A549 (cell line): ENCODE measurements at regions of chr1 and their contacts with region 1.

Region 1: DNA sequence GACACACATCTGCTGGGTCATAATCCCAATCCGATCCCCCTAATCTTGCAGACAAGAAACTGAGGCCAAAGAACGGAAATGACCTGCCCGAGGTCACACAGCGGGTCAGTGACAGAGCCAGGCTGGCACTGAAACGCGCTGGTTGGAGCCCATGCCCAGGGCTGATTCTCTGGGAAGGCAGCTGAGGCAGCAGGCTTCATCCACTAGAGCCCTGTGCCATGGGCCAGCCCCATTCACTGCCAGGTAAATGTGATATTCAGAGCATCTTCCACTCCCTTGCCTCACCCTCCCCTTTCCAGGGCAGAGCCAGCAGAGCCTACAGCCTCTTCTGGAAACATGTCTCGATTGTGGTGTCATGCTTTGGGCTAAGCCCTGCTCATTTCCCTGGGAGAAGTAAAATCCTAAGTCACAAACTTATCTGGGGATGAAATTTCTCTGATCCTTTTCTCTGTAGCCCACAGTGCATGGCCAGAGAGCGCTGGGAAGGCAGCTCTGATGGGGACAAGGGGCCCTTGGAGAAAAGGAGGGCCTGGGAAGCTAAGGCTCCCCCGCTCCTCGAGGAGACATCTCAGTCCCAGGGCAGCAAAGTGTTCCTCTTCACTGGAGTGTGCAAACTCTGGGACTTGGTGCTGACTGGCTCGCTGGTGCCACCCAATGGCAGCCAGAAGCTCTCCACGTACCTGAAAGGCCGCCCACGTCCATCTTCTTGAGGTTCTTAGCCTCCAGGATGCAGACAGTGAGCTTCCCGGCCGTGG is 110.4 kb downstream of the SYT2 start:
- DNase-seq: peak; percentile 82 to 83
- ATAC-seq: peak; percentile 89 to 98
- H3K4me3 ChIP-seq: no peak overlapping the region
- H3K27ac ChIP-seq: peak overlapping the region; percentile 53 to 73
- H3K4me1 ChIP-seq: peaks cover 5% of the 10 kb centered on the region; the same call in 2 of the 3 replicates
- CTCF ChIP-seq: peak; percentile 84
- EP300 ChIP-seq: no peak
- POLR2A ChIP-seq: no peak
- RAD21 ChIP-seq: peak; percentile 93 to 94

Region 2: DNA sequence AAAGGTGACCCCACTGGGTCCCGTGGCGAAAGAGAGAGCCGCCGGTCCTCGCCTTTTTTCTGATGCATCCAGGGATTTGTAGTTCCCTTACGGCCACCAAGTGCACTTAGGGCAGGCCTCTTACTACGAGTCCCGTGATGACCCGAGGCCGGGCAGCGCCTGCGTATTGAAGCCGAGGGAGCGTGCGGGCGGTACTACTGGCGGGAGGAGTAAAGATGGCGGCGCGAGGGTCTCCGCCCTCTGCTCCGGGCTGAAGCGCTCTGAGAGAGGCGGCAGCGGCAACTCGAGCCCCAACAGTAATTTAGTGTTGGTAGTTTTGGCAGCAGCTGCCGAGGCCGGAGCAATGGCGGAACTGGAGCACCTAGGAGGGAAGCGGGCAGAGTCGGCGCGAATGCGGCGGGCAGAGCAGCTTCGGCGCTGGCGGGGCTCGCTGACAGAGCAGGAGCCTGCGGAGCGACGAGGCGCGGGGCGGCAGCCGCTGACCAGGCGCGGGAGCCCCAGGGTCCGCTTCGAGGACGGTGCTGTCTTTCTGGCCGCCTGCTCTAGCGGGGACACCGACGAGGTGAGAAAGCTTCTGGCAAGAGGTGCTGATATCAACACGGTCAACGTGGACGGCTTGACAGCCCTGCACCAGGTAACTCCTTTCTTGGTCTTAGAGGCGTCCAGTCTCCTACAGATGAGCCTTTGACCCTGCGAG is 251.2 kb before region 1 on chr1 and contains the start of gene PPP1R12B:
- CTCF ChIA-PET with region 1: interaction called, 13 read pairs
- POLR2A ChIA-PET with region 1: no interaction called
- DNase-seq: peak; percentile 86 to 99
- ATAC-seq: peak; percentile 98 to 99
- H3K4me3 ChIP-seq: peak within 1 kb of the TSS; percentile 86
- H3K27ac ChIP-seq: peak within 1 kb of the TSS; percentile 87 to 92
- H3K4me1 ChIP-seq: peaks cover 38% of the 10 kb centered on the region
- CTCF ChIP-seq: no peak
- EP300 ChIP-seq: no peak
- POLR2A ChIP-seq: peak; percentile 77
- RAD21 ChIP-seq: 0 out of 5 replicates have a peak, but pooled peaks of 1 of the 2 experiments have one; percentile 16
- polyA plus RNA-seq, gene PPP1R12B: 12.1 and 14.8 TPM in 2 replicates

Region 3: GRCh38 chr1:202501281-202501680 is 98.6 kb before region 1 on chr1:
- CTCF ChIA-PET with region 1: interaction called, 26 read pairs
- POLR2A ChIA-PET with region 1: no interaction called
- DNase-seq: peak; percentile 3 to 41
- ATAC-seq: peak; percentile 84 to 87
- H3K4me3 ChIP-seq: no peak overlapping the region
- H3K27ac ChIP-seq: no peak overlapping the region
- H3K4me1 ChIP-seq: peaks cover 5% of the 10 kb centered on the region; the same call in 1 of the 3 replicates
- CTCF ChIP-seq: peak; percentile 74
- EP300 ChIP-seq: no peak
- POLR2A ChIP-seq: no peak
- RAD21 ChIP-seq: peak; percentile 77 to 85

Region 4: DNA sequence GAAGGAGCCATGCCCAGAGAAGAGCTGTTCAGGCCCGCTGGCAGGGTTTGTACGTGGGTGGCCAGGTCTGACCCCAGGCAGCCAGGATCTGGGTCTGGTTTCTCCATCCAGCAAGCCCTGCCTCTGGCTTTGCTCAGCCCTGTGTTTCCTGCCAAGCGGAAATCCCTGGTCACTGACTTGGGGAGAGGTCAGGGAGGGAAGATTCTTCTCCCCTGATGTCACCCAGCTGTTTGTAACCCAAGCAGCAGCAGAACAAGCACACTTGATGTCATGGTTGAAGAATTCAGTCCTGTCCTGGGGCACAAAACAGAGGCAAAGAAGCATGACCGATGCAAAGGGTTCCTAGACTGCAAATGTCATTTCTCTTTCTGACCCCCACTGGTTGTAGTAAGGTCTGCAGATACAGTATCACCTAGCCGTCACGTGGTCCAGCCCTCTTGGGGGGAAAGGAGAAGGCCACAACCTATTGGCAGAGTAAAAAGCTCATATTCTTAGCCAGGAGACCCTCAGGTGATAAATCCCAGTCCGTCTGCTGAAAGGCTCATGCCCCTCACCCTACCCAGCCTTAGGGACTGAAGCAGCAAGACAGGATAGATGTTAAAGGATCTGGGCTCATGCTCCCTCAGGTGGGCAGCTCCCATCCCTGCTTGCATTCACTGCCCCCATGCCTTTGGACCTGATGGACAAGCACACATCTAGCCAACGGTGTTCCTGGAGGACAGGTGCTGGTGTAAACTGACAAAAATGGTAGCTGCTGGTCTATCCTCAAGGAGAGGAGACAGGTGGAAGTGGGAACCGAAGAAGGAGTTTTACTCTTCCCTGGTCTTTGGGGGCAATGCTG is 10.4 kb before region 1 on chr1:
- CTCF ChIA-PET with region 1: interaction called, 36 read pairs
- POLR2A ChIA-PET with region 1: no interaction called
- DNase-seq: peak; percentile 93 to 96
- ATAC-seq: peak; percentile 94 to 95
- H3K4me3 ChIP-seq: 0 out of 3 replicates have a peak overlapping the region, but pooled peaks have one; percentile 3
- H3K27ac ChIP-seq: peak overlapping the region; percentile 80 to 86
- H3K4me1 ChIP-seq: peaks cover 65% of the 10 kb centered on the region
- CTCF ChIP-seq: no peak
- EP300 ChIP-seq: peak; percentile 65 to 66; a peak in 2 of 5 replicates
- POLR2A ChIP-seq: no peak
- RAD21 ChIP-seq: peak; percentile 13 to 52; a peak in 4 of 5 replicates

Region 5: DNA sequence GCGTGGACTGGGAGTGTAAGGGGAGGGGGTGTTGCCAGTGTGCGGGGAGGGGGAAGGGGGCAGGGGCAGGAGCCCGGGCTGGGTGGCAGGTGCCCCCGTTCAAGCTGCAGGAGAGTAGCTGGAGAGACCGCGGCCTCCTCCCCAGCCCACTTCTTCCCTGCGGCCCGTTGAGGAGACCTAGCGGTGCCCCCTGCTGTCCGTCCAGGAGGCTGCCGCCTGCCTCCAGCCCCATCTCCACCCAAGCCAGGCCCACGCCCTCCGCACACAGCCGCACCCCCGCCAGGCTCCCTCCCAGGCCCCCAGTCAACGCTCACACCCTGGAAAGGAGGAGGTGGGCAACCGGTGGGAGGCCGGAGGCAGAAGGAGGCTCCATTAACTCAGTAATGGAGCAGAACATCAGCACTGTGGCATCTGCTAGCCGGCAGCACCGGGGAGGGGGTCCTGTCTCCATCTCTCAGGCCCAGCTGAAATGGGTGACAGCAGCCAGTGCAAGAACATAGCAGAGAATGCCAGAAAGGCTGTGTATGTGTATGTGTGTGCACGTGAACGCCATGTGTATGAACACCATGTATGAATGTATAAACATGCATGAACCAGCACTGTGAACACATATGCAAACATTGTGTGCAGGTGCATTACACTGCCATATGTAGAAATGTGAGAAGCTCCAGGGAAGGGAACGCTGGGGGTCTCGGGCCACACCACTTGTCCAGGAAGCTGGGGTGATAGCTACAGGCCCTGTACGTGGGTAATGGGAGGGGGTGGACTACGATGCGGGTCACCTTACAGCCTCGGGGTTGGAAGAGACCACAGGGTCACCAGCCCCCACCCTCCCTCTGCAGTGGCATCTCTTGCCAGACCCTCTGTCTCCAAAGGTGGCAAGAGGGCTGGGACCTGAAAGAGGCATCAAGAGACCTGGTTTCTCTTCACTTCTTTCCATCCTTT is 25.8 kb after region 1 on chr1:
- CTCF ChIA-PET with region 1: interaction called, 10 read pairs
- POLR2A ChIA-PET with region 1: no interaction called
- DNase-seq: peak; percentile 79 to 86
- ATAC-seq: peak; percentile 89 to 97
- H3K4me3 ChIP-seq: no peak overlapping the region
- H3K27ac ChIP-seq: peak overlapping the region; percentile 35 to 48; a peak in 3 of 6 replicates
- H3K4me1 ChIP-seq: peaks cover 11% of the 10 kb centered on the region
- CTCF ChIP-seq: peak; percentile 60
- EP300 ChIP-seq: no peak
- POLR2A ChIP-seq: no peak
- RAD21 ChIP-seq: peak; percentile 68 to 75